ENCODE measurements at regions of chr3 and their contacts with region 1.

Region 1: GRCh38 chr3:154954753-154955152 is 125.4 kb upstream of the MME start:
- DNase-seq: peak; percentile 40
- H3K4me3 ChIP-seq: no peak overlapping the region
- H3K27ac ChIP-seq: no peak overlapping the region
- H3K4me1 ChIP-seq: no peaks in the 10 kb centered on the region
- H3K27me3 ChIP-seq: no peaks in the 10 kb centered on the region
- CTCF ChIP-seq: peak; percentile 59 to 78

Region 2: DNA sequence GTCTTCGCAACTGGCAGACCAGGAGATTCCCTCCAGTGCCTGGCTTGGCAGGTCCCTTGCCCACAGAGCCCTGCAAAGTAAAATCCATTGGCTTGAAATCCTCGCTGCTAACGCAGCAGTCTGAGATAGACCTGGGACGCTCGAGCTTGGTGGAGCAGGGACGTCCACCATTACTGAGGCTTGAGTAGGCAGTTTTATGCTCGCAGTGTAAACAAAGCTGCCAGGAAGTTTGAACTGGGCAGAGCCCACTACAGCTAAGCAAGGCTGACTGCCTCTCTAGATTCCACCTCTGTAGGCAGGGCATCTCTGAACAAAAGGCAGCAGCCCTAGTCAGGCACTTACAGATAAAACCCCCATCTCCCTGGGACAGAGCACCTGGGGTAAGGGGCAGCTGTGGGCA is 79.6 kb before region 1 on chr3:
- CTCF ChIA-PET with region 1: no interaction called
- dilution Hi-C with region 1: no loop called
- in situ Hi-C with region 1: no loop called
- intact Hi-C with region 1: loop called (anchors 2 kb)
- DNase-seq: no peak
- H3K4me3 ChIP-seq: no peak overlapping the region
- H3K27ac ChIP-seq: no peak overlapping the region
- H3K4me1 ChIP-seq: no peaks in the 10 kb centered on the region
- H3K27me3 ChIP-seq: no peaks in the 10 kb centered on the region
- CTCF ChIP-seq: no peak

Measured in mammary epithelial cell (primary cell).